ENCODE measurements at regions of chr11 and their contacts with region 1.

Region 1: GRCh38 chr11:114439229-114440120 is at the start of gene REXO2:
- DNase-seq: peak; percentile 95
- H3K4me3 Mint-ChIP-seq: peak within 1 kb of the TSS; percentile 94
- H3K27ac Mint-ChIP-seq: peak within 1 kb of the TSS; percentile 82
- H3K4me1 Mint-ChIP-seq: peaks cover 23% of the 10 kb centered on the region
- H3K27me3 Mint-ChIP-seq: no peaks in the 10 kb centered on the region
- total RNA-seq, gene REXO2: 51.1 to 51.4 TPM

Region 2: GRCh38 chr11:114059278-114059983 is 380.0 kb before region 1 on chr11 and contains the start of gene ZBTB16:
- CTCF ChIA-PET with region 1: no interaction called
- intact Hi-C with region 1: loop called (anchors 10 kb)
- DNase-seq: peak; percentile 76
- H3K4me3 Mint-ChIP-seq: peak within 1 kb of the TSS; percentile 83
- H3K27ac Mint-ChIP-seq: no peak within 1 kb of the TSS
- H3K4me1 Mint-ChIP-seq: peaks cover 8% of the 10 kb centered on the region
- H3K27me3 Mint-ChIP-seq: peaks cover 24% of the 10 kb centered on the region
- total RNA-seq, gene ZBTB16: 1.5 to 2.3 TPM

Region 3: DNA sequence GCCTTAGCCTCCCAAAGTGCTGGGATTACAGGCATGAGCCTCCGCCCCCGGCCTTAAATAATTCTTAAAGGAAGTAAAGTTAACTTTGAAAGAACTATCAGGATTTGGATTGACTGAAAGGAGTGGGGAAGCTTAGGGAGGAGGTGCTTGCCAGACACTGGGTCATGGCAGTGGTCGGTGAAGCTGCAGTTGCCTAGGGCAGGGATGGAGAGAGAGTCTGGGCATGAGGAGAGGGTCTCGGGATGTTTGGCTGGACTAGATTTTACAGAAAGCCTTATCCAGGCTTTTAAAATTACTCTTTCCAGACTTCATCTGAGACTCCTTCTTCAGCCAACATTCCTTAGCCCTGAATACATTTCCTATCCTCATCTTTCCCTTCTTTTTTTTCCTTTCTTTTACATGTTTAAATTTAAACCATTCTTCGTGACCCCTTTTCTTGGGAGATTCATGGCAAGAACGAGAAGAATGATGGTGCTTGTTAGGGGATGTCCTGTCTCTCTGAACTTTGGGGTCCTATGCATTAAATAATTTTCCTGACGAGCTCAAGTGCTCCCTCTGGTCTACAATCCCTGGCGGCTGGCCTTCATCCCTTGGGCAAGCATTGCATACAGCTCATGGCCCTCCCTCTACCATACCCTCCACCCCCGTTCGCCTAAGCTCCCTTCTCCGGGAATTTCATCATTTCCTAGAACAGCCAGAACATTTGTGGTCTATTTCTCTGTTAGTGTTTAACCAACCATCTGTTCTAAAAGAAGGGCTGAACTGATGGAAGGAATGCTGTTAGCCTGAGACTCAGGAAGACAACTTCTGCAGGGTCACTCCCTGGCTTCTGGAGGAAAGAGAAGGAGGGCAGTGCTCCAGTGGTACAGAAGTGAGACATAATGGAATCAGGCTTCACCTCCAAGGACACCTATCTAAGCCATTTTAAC is 143.5 kb before region 1 on chr11 and contains the start of gene NNMT:
- CTCF ChIA-PET with region 1: no interaction called
- intact Hi-C with region 1: no loop called
- DNase-seq: no peak
- H3K4me3 Mint-ChIP-seq: no peak within 1 kb of the TSS
- H3K27ac Mint-ChIP-seq: no peak within 1 kb of the TSS
- H3K4me1 Mint-ChIP-seq: no peaks in the 10 kb centered on the region
- H3K27me3 Mint-ChIP-seq: peaks cover 2% of the 10 kb centered on the region
- total RNA-seq, gene NNMT: not detected

Region 4: GRCh38 chr11:114348200-114349191 is 91.0 kb before region 1 on chr11:
- CTCF ChIA-PET with region 1: no interaction called
- intact Hi-C with region 1: loop called (anchors 1 kb)
- DNase-seq: peak; percentile 64
- H3K4me3 Mint-ChIP-seq: no peak overlapping the region
- H3K27ac Mint-ChIP-seq: no peak overlapping the region
- H3K4me1 Mint-ChIP-seq: peaks cover 3% of the 10 kb centered on the region
- H3K27me3 Mint-ChIP-seq: no peaks in the 10 kb centered on the region

Region 5: GRCh38 chr11:114501901-114502300 is 62.4 kb after region 1 on chr11:
- CTCF ChIA-PET with region 1: no interaction called
- intact Hi-C with region 1: loop called (anchors 10 kb)
- DNase-seq: no peak
- H3K4me3 Mint-ChIP-seq: no peak overlapping the region
- H3K27ac Mint-ChIP-seq: no peak overlapping the region
- H3K4me1 Mint-ChIP-seq: no peaks in the 10 kb centered on the region
- H3K27me3 Mint-ChIP-seq: peaks cover 22% of the 10 kb centered on the region

Region 6: DNA sequence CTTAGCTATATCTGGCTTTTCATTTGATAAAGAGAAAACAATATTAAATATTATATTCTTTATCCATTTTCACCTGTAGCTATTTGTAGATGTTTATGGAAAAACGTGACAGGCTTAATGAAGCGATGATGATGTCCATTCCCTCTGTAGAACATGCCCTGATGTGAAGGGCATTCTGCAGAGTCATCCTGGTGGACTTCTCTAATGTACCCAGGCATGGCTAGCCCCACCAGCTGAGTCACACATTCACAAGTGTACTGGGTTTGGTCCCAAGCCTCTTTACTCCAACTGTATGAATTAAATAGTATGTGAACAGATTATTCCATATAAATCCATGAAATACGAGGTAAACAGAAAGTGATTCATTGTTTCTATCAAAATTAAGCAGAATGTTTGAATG is 925.4 kb after region 1 on chr11:
- CTCF ChIA-PET with region 1: no interaction called
- intact Hi-C with region 1: no loop called
- DNase-seq: no peak
- H3K4me3 Mint-ChIP-seq: no peak overlapping the region
- H3K27ac Mint-ChIP-seq: no peak overlapping the region
- H3K4me1 Mint-ChIP-seq: no peaks in the 10 kb centered on the region
- H3K27me3 Mint-ChIP-seq: peaks cover 5% of the 10 kb centered on the region